Heart right ventricle (tissue), 16 donors: ENCODE measurements at regions of chr12 and their contacts with region 1.

Region 1: GRCh38 chr12:1282670-1283335 is 291.8 kb downstream of the ERC1 start:
- DNase-seq: peak; percentile 25 to 43
- ATAC-seq: peak in 7 of 8 donors; percentile 50 to 91 (median 83)
- H3K4me3 ChIP-seq: no peak overlapping the region
- H3K27ac ChIP-seq: peak overlapping the region in 8 of 10 donors; percentile 5 to 68 (median 36)
- H3K4me1 ChIP-seq: peaks cover 0 to 6% (median 0%) of the 10 kb centered on the region in 9 donors
- H3K27me3 ChIP-seq: no peaks in the 10 kb centered on the region
- CTCF ChIP-seq: no peak

Region 2: GRCh38 chr12:1559676-1560091 is 276.9 kb after region 1 on chr12:
- intact Hi-C with region 1: loop called in 1 of 10 experiments (anchors 10 kb)
- DNase-seq: no peak
- ATAC-seq: no peak
- H3K4me3 ChIP-seq: no peak overlapping the region
- H3K27ac ChIP-seq: no peak overlapping the region
- H3K4me1 ChIP-seq: peaks cover 0 to 10% (median 0%) of the 10 kb centered on the region in 9 donors
- H3K27me3 ChIP-seq: no peaks in the 10 kb centered on the region
- CTCF ChIP-seq: no peak

Region 3: GRCh38 chr12:1576410-1577241 is 293.8 kb after region 1 on chr12:
- intact Hi-C with region 1: loop called in 5 of 10 experiments (anchors 5 to 10 kb)
- DNase-seq: peak; percentile 21 to 55
- ATAC-seq: peak; percentile 34 to 71 (median 57)
- H3K4me3 ChIP-seq: peak overlapping the region in 6 of 10 donors; percentile 0 to 36 (median 28)
- H3K27ac ChIP-seq: peak overlapping the region in 7 of 10 donors; percentile 2 to 58 (median 46)
- H3K4me1 ChIP-seq: peaks cover 0 to 39% (median 35%) of the 10 kb centered on the region in 9 donors
- H3K27me3 ChIP-seq: no peaks in the 10 kb centered on the region
- CTCF ChIP-seq: no peak

Region 4: DNA sequence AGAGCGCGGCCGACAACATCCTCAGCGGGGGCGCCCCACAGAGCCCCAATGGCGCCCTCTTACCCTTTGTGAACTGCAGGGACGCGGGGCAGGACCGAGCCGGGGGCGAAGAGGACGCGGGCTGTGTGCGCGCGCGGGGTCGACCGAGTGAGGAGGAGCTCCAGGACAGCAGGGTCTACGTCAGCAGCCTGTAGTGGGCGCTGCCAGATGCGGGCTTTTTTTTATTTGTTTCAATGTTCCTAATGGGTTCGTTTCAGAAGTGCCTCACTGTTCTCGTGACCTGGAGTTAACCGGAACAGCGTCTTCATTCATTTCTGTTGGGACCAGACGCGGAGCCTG is 1408.2 kb after region 1 on chr12:
- intact Hi-C with region 1: no loop called
- DNase-seq: no peak
- ATAC-seq: peak in 2 of 8 donors; percentile 3 to 31
- H3K4me3 ChIP-seq: peak overlapping the region in 9 of 10 donors; percentile 11 to 57 (median 46)
- H3K27ac ChIP-seq: peak overlapping the region in 1 of 10 donors; percentile 77
- H3K4me1 ChIP-seq: peaks cover 0 to 22% (median 0%) of the 10 kb centered on the region in 9 donors
- H3K27me3 ChIP-seq: peaks cover 0 to 13% (median 0%) of the 10 kb centered on the region in 7 donors
- CTCF ChIP-seq: peak in 2 of 9 donors; percentile 18 to 20